Breast epithelium (tissue), 4 donors: ENCODE measurements at regions of chr4 and their contacts with region 1.

Region 1: DNA sequence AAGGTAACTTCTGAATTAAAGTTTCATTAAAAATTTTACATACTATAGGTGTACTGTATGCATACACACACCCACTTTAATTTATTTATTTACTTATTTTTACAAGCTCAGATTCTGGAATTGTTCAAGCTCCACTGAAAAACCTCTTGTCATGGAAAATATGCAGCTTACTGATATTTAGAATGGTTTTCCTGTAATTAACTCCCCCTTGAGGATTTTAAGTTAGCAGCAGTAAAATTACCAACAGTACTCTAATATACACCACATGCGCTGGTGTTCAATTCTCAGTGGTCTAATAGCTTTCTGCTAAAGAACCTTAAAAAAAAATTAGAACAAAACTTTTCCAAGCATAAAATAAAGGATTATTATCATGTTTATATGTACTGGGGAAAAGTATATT is 12.0 kb downstream of the MAB21L2 start:
- DNase-seq: no peak
- H3K4me3 ChIP-seq: no peak overlapping the region
- H3K27ac ChIP-seq: no peak overlapping the region
- H3K4me1 ChIP-seq: no peaks in the 10 kb centered on the region
- H3K27me3 ChIP-seq: no peaks in the 10 kb centered on the region
- CTCF ChIP-seq: no peak
- POLR2A ChIP-seq: no peak

Region 2: GRCh38 chr4:150664935-150665334 is 70.9 kb after region 1 on chr4:
- intact Hi-C with region 1: no loop called
- DNase-seq: no peak
- H3K4me3 ChIP-seq: no peak overlapping the region
- H3K27ac ChIP-seq: no peak overlapping the region
- H3K4me1 ChIP-seq: no peaks in the 10 kb centered on the region
- H3K27me3 ChIP-seq: no peaks in the 10 kb centered on the region
- CTCF ChIP-seq: no peak
- POLR2A ChIP-seq: no peak

Region 3: DNA sequence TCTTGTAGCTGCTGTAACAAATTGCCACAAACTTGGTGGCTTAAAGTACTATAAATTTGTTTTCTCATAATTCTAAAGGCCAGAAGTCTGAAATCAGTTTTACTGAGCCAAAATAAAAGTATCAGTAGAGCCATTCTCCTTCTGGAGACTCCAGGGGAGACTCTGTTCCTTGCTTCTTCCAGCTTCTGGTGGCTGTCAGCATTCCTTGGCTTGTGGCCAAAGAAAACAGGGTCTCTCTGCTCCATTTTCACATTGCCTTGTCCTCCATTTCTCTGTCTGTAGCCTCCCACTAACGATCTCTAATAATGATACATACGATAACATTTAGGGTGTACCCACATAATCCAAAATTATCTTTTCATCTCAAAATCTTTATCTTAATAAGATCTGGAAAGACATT is 188.3 kb after region 1 on chr4:
- intact Hi-C with region 1: loop called (anchors 5 kb)
- DNase-seq: no peak
- H3K4me3 ChIP-seq: no peak overlapping the region
- H3K27ac ChIP-seq: no peak overlapping the region
- H3K4me1 ChIP-seq: no peaks in the 10 kb centered on the region
- H3K27me3 ChIP-seq: no peaks in the 10 kb centered on the region
- CTCF ChIP-seq: no peak
- POLR2A ChIP-seq: no peak